ENCODE measurements at regions of chr9 and their contacts with region 1.

Region 1: GRCh38 chr9:33290247-33291030 is at the start of gene NFX1:
- DNase-seq: peak; percentile 100
- H3K4me3 Mint-ChIP-seq: peak within 1 kb of the TSS; percentile 99
- H3K27ac Mint-ChIP-seq: peak within 1 kb of the TSS; percentile 100
- H3K4me1 Mint-ChIP-seq: peaks cover 53% of the 10 kb centered on the region
- H3K27me3 Mint-ChIP-seq: peaks cover 3% of the 10 kb centered on the region
- total RNA-seq, gene NFX1: 37.2 and 38.7 TPM in 2 replicates

Region 2: GRCh38 chr9:32672461-32672860 is 618.0 kb before region 1 on chr9:
- intact Hi-C with region 1: no loop called
- DNase-seq: no peak
- H3K4me3 Mint-ChIP-seq: no peak overlapping the region
- H3K27ac Mint-ChIP-seq: no peak overlapping the region
- H3K4me1 Mint-ChIP-seq: no peaks in the 10 kb centered on the region
- H3K27me3 Mint-ChIP-seq: no peaks in the 10 kb centered on the region

Region 3: GRCh38 chr9:33116860-33117259 is 173.6 kb before region 1 on chr9:
- intact Hi-C with region 1: no loop called
- DNase-seq: no peak
- H3K4me3 Mint-ChIP-seq: peak overlapping the region; percentile 40
- H3K27ac Mint-ChIP-seq: peak overlapping the region; percentile 67
- H3K4me1 Mint-ChIP-seq: peaks cover 27% of the 10 kb centered on the region
- H3K27me3 Mint-ChIP-seq: no peaks in the 10 kb centered on the region

Region 4: DNA sequence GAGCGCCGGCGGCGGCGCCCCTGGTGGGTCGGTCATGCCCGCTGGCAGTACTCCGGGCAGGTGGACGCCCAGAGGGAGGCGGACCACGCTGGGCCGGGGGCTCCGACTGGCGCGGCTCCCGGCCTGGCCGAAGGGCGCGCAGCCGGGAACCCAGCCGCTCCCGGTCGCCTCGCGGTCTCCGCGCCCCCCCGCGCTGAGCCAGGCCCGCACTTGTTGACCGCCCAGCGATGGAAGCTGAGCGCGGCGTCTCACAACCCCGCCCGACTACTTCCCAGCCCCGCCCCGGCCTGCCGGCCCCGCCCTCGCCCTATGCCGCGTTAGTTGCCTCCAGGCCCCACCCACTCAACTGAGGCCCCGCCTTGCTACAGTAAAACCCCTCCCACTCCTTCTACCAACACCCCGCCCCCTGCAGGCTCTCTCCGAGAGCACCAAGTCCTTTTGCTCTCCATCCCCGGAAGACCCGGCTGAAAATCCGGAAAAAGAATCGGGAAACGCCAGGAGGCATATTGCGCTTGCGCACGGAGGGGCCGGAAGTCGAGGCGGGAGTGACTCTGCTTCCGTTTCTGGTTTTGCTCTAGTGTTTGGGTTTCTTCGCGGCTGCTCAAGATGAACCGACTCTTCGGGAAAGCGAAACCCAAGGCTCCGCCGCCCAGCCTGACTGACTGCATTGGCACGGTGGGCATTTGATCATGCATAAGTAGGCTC is 25.8 kb before region 1 on chr9 and contains the starts of genes BAG1 and CHMP5:
- intact Hi-C with region 1: loop called (anchors 1 kb)
- DNase-seq: peak; percentile 100
- H3K4me3 Mint-ChIP-seq: peak within 1 kb of the TSS; percentile 97
- H3K27ac Mint-ChIP-seq: peak within 1 kb of the TSS; percentile 99
- H3K4me1 Mint-ChIP-seq: peaks cover 52% of the 10 kb centered on the region
- H3K27me3 Mint-ChIP-seq: no peaks in the 10 kb centered on the region
- total RNA-seq, gene BAG1: 72.4 and 73.6 TPM in 2 replicates
- total RNA-seq, gene CHMP5: 73.9 and 77.7 TPM in 2 replicates

Region 5: GRCh38 chr9:33346564-33346963 is 56.1 kb after region 1 on chr9:
- intact Hi-C with region 1: loop called (anchors 2 kb)
- DNase-seq: no peak
- H3K4me3 Mint-ChIP-seq: no peak overlapping the region
- H3K27ac Mint-ChIP-seq: no peak overlapping the region
- H3K4me1 Mint-ChIP-seq: peaks cover 6% of the 10 kb centered on the region
- H3K27me3 Mint-ChIP-seq: no peaks in the 10 kb centered on the region

Region 6: DNA sequence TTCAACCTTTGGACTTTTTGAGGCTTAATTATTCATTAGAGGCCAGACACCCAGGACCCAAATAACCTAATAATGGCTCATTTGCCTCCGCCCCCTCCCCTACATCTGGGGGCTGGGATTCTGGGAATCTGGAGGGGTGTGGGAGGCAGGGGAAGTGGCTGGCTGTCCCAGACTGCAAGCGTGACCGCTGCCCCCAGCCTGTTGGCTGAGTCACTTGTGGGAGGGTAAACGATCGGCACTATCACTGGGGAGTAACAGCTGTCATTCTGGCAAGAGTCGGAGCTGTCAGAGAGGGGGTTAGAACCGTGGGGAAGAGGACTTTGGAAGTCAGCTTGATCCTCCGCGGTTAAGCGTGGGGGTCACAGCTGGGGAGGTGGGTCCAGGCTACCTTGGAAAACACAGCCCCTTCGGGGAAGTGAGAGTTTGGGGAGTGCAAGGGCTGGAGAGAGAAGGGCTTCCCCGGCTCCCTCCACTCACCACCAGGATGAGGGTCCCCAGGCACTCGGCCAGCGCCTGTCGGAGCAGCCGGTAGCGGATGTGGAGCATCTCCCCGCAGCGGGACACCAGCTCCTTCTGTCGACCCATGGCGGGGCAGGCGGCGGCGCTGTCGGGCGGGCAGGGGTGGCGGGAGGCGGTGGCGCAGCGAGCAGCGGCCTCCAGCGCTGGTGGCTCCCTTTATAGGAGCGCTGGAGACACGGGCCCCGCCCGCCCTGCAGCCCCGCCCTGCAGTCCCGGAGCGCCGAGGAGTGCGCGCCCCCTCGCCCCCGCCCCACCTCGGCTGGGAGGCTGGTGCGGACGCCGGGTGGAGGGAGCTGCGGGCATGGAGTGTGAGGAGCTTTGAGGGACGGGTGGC is 156.7 kb after region 1 on chr9 and contains the start of gene AQP3:
- intact Hi-C with region 1: loop called (anchors 1 kb)
- DNase-seq: peak; percentile 94
- H3K4me3 Mint-ChIP-seq: peak within 1 kb of the TSS; percentile 86
- H3K27ac Mint-ChIP-seq: peak within 1 kb of the TSS; percentile 91
- H3K4me1 Mint-ChIP-seq: peaks cover 50% of the 10 kb centered on the region
- H3K27me3 Mint-ChIP-seq: no peaks in the 10 kb centered on the region
- total RNA-seq, gene AQP3: 3.2 and 4.1 TPM in 2 replicates

Region 7: DNA sequence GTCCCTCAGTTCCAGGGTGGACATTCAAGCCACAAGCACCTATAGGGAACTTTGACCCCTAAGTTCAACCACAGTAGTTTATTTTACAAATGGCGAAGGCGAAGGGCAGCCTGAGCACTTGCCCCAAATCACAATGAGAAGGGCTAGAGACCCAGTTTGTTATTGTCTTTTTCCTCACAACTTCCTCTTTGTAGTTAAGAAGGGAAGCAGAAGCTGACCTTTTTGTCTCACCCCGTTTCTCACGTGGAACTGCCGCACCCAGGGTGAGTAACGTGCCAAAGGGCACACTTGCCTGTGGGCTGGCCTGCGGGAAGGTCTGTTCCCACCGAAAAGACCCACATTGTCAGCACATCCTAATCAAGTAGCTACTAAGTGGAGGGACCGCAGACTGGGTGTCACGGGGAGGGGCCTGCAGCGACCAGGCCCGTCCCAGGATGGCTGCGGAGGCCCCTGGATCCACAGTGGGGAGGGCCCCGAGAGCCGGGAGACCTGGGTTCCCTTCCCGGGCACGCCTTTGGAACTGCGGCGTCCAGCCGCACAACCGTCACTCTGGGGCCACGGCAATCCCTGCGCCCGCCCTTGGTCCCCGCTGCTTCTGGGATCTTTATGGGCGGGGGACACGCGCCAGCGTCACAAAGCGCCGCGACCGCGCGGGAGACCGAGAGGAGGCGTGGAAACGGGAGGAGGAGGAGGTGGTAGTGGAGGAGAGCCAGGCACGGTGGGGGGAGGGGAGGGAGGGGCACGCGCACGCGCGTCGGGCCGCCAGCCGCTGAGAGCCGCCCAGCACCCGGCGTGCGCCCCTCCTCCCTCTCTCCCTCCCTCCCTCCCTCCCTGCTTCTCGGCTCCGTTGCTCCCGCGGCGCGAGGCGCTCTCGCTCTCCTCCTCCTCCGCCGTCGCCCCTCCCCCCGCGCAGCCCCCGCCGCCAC is 526.2 kb after region 1 on chr9 and contains the start of gene UBE2R2:
- intact Hi-C with region 1: loop called (anchors 10 kb)
- DNase-seq: peak; percentile 97
- H3K4me3 Mint-ChIP-seq: peak within 1 kb of the TSS; percentile 94
- H3K27ac Mint-ChIP-seq: peak within 1 kb of the TSS; percentile 95
- H3K4me1 Mint-ChIP-seq: peaks cover 48% of the 10 kb centered on the region
- H3K27me3 Mint-ChIP-seq: peaks cover 3% of the 10 kb centered on the region
- total RNA-seq, gene UBE2R2: 41.6 and 41.9 TPM in 2 replicates